HEK293T (cell line): ENCODE measurements at regions of chr1 and their contacts with region 1.

Region 1: GRCh38 chr1:31715087-31715872 is 11.5 kb upstream of the COL16A1 start:
- DNase-seq: peak; percentile 96

Region 2: DNA sequence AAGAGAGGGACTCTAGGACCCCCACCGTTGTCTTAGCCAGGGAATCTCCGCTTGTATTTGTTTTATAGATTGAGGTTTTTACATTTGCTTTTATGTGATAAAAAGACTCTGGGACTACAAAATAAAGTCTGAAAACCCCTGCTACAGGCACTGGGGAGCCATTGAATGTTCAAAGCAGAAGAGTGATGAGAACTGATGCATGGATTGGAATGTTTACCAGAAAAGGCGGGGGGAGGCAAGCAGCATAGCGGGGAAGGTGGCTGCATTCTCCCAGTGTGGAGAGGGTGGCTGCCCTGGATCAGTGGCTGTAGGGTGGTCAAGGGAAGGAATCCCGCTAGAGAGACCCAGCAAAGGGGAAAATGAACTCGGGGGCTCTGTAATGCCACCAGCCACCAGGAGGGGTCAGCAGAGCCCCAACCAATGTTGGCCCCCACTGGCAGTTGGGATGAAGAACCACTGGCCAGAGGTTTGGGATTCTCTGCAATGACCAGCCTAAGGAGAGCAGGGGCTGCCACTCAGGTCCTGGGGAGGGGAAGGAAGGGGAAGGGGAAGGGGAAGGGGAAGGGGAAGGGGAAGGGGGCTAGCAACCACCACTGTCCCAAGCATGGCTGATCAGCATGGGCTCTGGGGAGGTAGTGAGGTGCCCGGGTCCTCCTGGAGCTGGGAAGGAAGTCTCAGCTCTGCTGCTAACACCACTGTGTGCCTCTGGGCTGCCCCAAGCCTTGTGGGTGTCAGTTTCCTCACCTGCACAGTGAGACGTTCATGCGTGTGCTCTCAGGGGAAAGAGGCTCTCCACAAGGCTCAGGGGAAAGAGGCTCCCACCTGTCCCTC is 51.4 kb before region 1 on chr1:
- CTCF ChIA-PET with region 1: interaction called, 18 read pairs
- POLR2A ChIA-PET with region 1: no interaction called
- DNase-seq: peak; percentile 95

Region 3: DNA sequence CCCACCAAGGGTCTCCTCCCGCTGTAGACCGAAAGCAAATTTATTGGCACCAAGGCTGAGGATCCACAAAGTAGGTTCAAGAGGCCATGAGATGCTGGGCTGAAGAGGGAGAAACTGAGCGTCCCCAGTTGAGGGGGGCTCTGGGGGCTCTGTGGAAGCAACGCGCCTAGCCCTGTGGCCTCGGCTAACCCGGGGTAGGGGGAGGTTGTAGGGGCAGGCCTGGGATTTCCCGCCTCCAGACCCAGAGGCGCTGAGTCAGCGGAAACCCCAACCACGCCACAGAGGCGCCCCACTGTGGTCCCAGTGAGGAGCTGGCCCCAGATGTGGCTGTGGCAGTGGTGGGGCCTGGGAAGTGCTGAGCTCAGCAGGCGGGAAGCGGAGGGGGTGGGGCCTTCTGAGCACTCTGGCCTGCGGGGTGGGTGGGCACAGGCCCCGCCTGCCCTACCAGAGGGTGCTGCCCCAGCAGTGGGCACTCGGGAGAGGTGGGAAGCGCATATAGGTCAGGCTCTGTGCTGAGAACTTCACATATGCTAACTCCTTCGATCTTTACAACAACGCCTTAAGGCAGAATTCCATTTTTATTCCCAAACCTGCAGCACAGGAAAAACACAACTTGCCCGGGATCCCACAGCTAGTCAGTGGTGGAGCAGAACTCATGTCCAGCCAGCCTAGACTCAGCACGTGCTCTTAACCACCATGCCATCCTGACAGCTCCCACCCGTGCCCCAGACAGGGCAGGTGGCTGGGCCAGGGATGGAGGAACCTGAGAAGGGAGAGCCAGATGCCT is 10.0 kb before region 1 on chr1:
- CTCF ChIA-PET with region 1: interaction called, 11 read pairs
- POLR2A ChIA-PET with region 1: interaction called, 20 read pairs
- DNase-seq: peak; percentile 69

Region 4: GRCh38 chr1:31725777-31726535 is 10.7 kb after region 1 on chr1:
- CTCF ChIA-PET with region 1: interaction called, 6 read pairs
- POLR2A ChIA-PET with region 1: interaction called, 10 read pairs
- DNase-seq: no peak

Region 5: DNA sequence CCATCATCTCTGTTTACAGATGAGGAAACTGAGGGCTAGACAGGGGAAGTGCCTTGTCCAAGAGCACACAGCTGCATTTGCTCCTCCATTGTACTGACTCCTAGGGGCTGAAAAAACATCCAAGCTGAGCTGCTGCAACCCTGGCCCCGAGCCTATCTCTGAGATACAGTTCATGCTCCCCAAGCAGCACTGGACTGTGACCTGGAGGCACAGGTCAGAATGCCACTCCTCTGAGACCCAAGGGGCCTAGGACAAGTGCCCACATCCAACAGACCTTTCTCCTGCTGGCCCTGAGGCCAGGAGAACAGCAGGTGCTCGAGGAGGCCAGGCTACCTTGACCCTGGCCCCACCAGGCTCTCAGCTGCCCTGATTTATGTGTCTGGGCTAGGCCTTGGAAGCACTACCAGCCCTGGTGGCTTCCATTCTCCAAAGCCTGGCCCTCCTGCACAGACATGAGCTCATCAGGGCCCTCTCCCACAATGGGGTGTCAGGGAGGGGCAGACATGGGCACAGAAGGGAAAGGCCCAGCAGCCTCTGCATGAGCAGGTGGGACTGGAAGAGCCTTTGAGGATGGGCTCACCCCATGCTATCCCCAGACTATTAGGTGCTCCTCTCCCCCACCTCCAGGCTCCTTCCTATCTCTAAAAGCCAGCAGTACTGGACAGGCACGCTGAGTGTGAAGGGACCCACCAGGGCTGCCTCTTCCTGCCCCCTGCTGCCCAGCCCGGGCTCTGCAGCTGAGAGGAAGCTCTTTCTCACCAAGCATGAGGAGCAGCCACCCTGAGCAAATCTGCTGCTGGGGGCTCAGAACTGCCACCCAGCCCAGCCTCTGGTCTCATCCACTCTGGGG is 30.0 kb after region 1 on chr1:
- CTCF ChIA-PET with region 1: interaction called, 18 read pairs
- POLR2A ChIA-PET with region 1: interaction called, 3 read pairs
- DNase-seq: peak; percentile 95